GM12878 (cell line): ENCODE measurements at regions of chr7 and their contacts with region 1.

Region 1: DNA sequence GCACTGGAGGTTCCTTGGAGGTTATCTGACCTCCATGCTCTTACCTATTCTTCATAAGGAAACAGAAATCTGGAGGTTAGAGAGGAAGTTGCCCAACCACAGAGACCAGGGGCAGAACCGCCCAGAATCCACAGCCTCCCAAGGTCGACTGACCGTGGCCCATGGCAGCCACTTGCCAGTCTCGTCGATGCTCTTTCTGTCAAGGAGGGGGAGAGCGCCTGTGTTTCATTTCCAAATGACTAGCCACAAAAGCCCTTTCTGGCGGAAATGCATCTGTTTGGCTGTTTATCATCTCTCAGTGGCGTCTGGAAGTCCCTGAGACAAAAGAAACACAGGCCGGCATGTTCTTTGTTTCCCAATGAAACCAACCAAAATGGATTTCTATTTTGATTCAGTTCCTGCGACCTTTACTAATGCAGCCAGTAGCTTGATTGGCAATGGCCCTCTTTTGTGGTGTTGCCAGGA is 2.9 kb downstream of the RAMP3 start:
- DNase-seq: peak; percentile 9
- ATAC-seq: peak; percentile 80
- H3K4me3 ChIP-seq: no peak overlapping the region
- H3K27ac ChIP-seq: no peak overlapping the region
- H3K4me1 ChIP-seq: peaks cover 7% of the 10 kb centered on the region
- H3K27me3 ChIP-seq: peaks cover 3 to 5% of the 10 kb centered on the region in 2 experiments; a peak in 2 of 4 replicates
- CTCF ChIP-seq: no peak
- EP300 ChIP-seq: no peak
- POLR2A ChIP-seq: no peak
- RAD21 ChIP-seq: no peak

Region 2: GRCh38 chr7:45259966-45260646 is 99.7 kb after region 1 on chr7:
- CTCF ChIA-PET with region 1: interaction called, 58 read pairs
- POLR2A ChIA-PET with region 1: no interaction called
- RAD21 ChIA-PET with region 1: interaction called, 5 read pairs
- SMC1A ChIA-PET with region 1: interaction called, 19 read pairs
- in situ Hi-C with region 1: no loop called
- intact Hi-C with region 1: no loop called
- DNase-seq: no peak
- ATAC-seq: peak; percentile 98
- H3K4me3 ChIP-seq: no peak overlapping the region
- H3K27ac ChIP-seq: no peak overlapping the region
- H3K4me1 ChIP-seq: peaks cover 7% of the 10 kb centered on the region
- H3K27me3 ChIP-seq: no peaks in the 10 kb centered on the region; a peak in 1 of 4 replicates
- CTCF ChIP-seq: peak; percentile 94 to 99 (median 99)
- EP300 ChIP-seq: no peak
- POLR2A ChIP-seq: no peak
- RAD21 ChIP-seq: peak; percentile 90

Region 3: DNA sequence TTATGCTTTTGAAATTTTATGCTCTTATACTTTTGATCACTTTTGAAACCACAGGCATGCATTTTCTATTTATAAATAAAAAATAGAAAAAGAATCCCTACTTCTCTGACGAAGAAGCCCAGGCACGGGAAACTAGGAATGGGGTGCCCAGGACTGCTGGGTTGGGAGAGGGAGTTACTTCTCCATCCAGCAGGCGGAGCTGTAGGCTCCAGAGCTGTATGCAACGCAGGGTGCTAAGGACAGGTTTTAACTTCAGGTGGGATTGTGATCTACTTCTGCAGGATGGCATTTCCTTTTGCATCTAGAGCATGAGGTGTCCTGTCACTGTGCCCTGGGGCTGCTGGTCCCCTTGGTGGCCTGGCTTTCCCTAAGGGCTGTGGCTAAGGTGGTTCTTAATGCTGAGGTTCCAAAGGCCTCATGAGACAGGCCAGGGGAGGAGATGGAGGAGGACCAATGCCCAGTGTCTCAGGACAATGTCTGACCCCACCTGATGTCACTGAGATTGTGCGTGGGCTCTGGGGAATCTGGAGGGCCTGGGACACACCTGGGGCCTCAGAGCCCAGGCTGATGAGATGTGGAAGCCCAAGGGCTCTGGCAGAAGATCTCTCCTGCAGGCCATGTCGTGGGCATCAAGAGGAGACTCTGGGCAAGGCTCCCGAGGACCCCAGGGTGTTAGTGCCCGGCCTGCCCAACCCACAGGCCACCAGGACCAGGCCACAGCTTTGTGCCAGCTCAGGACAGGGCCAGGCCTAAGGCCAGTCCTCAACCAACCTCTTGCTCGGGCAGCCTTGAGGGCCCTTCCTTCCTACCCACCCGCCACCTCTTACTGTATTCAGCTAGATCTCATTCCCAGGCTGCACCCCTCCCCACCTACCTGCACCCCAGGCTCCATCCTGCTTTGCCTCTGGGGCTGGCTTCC is 711.9 kb after region 1 on chr7:
- CTCF ChIA-PET with region 1: no interaction called
- POLR2A ChIA-PET with region 1: no interaction called
- RAD21 ChIA-PET with region 1: no interaction called
- SMC1A ChIA-PET with region 1: no interaction called
- in situ Hi-C with region 1: loop called (anchors 25 kb)
- intact Hi-C with region 1: no loop called
- DNase-seq: no peak
- ATAC-seq: peak; percentile 67
- H3K4me3 ChIP-seq: no peak overlapping the region
- H3K27ac ChIP-seq: no peak overlapping the region
- H3K4me1 ChIP-seq: no peaks in the 10 kb centered on the region
- H3K27me3 ChIP-seq: no peaks in the 10 kb centered on the region; a peak in 1 of 4 replicates
- CTCF ChIP-seq: peak; percentile 46 to 70 (median 67)
- EP300 ChIP-seq: no peak
- POLR2A ChIP-seq: no peak
- RAD21 ChIP-seq: 0 out of 2 replicates have a peak, but pooled peaks have one; percentile 12